CD4-positive, alpha-beta memory T cell (primary cell): ENCODE measurements at regions of chr17 and their contacts with region 1.

Region 1: DNA sequence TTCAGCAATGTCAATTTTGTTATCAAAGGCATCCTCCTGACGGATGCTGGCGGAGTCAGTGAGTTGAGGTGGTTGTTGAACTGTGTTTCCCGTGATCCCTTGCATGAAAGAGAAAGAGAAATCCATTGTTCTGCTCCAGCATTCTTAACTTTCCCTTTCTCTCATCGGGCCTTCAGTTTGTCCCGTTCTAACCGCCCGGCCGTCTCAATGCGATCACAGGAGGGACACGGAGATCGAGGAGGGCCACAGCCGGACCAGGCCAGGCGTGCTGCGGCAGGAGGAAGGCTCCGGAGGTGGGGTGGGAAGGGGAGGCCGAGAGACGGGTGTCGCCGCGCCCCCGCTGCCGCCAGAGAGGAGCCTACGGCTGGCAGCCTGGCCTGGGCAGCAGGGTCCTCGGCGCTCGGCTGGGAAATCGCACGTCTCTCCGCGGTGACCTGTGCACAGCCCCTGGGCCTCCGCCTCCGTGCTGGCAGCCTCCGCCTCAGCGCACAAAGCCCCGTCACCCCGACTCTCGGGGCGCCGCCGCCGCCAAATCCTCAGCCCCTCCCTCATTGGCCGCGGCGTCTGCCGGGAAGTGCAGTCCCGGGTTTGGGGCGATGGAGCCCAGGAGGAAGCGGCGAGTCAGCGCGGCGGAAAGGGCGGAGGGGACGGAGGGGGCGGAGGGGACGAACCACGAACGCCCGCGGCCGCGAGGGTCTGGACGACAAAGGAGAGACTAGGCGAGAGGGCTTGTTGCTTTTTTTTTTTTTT is 38.1 kb downstream of the SOST start:
- DNase-seq: peak; percentile 71 to 78 (median 75)
- H3K4me3 ChIP-seq: peak overlapping the region; percentile 68 to 91
- H3K4me3 Mint-ChIP-seq: peak overlapping the region; percentile 97 to 100 (median 98)
- H3K27ac ChIP-seq: peak overlapping the region; percentile 82
- H3K27ac Mint-ChIP-seq: peak overlapping the region; percentile 85 to 100 (median 98)
- H3K4me1 ChIP-seq: peaks cover 8% of the 10 kb centered on the region
- H3K4me1 Mint-ChIP-seq: peaks cover 3 to 8% (median 6%) of the 10 kb centered on the region in 4 donors
- H3K27me3 ChIP-seq: no peaks in the 10 kb centered on the region
- H3K27me3 Mint-ChIP-seq: peaks cover 3% of the 10 kb centered on the region in 2 donors

Region 2: GRCh38 chr17:43628089-43628650 is 92.3 kb before region 1 on chr17:
- CTCF ChIA-PET with region 1: no interaction called
- POLR2A ChIA-PET with region 1: no interaction called
- intact Hi-C with region 1: no loop called
- DNase-seq: no peak
- H3K4me3 ChIP-seq: no peak overlapping the region
- H3K4me3 Mint-ChIP-seq: no peak overlapping the region
- H3K27ac ChIP-seq: no peak overlapping the region
- H3K27ac Mint-ChIP-seq: peak overlapping the region in 1 of 7 donors; percentile 19
- H3K4me1 ChIP-seq: no peaks in the 10 kb centered on the region
- H3K4me1 Mint-ChIP-seq: no peaks in the 10 kb centered on the region
- H3K27me3 ChIP-seq: no peaks in the 10 kb centered on the region
- H3K27me3 Mint-ChIP-seq: peaks cover 5 to 10% of the 10 kb centered on the region in 2 donors

Region 3: DNA sequence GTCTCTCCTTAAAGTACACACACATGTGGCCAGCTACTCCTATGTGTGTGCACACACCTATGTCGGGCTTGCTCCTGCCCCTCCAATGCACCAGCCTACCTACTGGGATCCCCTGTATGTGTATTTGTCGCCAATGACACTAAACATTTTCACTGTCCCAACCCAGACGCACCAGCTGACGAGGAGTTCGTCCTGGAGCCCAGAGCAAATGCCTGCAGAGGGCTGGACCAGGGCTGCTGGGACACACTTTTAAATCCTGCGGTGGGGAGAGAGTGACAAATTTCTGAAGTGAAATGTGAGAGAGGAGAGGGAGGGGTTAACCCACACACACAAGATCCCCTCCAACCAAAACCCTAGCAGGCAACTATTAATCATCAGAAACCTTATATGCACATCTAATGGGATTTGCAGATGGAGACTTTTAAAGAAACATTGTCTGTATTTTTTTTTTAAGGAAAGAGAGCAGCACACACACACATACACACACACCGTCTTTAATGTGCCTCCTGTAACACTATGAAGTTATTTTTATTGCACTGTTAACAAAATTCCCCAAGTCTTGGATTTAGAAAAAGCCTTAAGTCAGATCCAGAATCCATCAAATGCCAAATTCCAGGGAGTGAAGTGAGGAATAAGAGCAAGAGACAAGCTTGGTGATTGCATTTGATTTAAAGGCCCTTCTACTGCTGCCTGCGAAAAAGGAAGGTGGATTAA is 58.6 kb before region 1 on chr17 and contains the start of gene MEOX1:
- CTCF ChIA-PET with region 1: no interaction called
- POLR2A ChIA-PET with region 1: no interaction called
- intact Hi-C with region 1: no loop called
- DNase-seq: no peak
- H3K4me3 ChIP-seq: peak within 1 kb of the TSS in 1 of 2 donors; percentile 40
- H3K4me3 Mint-ChIP-seq: peak within 1 kb of the TSS; percentile 33 to 87 (median 69)
- H3K27ac ChIP-seq: peak within 1 kb of the TSS; percentile 20
- H3K27ac Mint-ChIP-seq: peak within 1 kb of the TSS; percentile 55 to 85 (median 73)
- H3K4me1 ChIP-seq: peaks cover 62% of the 10 kb centered on the region
- H3K4me1 Mint-ChIP-seq: peaks cover 16 to 55% (median 47%) of the 10 kb centered on the region in 4 donors
- H3K27me3 ChIP-seq: no peaks in the 10 kb centered on the region
- H3K27me3 Mint-ChIP-seq: no peaks in the 10 kb centered on the region
- total RNA-seq, gene MEOX1: 1.7 to 2.1 TPM

Region 4: GRCh38 chr17:43760254-43760852 is 39.9 kb after region 1 on chr17:
- CTCF ChIA-PET with region 1: no interaction called
- POLR2A ChIA-PET with region 1: no interaction called
- intact Hi-C with region 1: loop called (anchors 1 kb)
- DNase-seq: peak; percentile 79 to 85 (median 83)
- H3K4me3 ChIP-seq: no peak overlapping the region
- H3K4me3 Mint-ChIP-seq: no peak overlapping the region
- H3K27ac ChIP-seq: no peak overlapping the region
- H3K27ac Mint-ChIP-seq: no peak overlapping the region
- H3K4me1 ChIP-seq: no peaks in the 10 kb centered on the region
- H3K4me1 Mint-ChIP-seq: peaks cover 0 to 6% (median 4%) of the 10 kb centered on the region in 4 donors
- H3K27me3 ChIP-seq: no peaks in the 10 kb centered on the region
- H3K27me3 Mint-ChIP-seq: peaks cover 18 to 19% of the 10 kb centered on the region in 2 donors

Region 5: DNA sequence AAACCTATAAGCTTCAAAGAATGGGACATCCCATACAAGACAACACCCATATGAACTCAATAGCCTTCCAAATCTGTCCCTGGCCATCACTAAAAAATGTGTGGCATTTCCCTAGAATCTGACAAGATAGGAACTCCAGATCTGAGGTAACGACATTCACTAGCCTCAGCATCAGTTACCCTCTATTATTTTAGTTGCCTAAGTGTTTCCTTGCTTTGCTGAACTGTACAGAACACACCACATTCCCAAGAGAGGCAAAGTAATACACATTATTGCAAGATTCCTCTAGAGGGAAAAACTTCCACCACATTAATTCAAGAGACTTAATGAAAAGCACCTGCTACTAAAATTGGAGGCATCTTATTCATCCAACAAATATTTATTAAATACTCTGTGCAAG is 341.0 kb after region 1 on chr17:
- CTCF ChIA-PET with region 1: no interaction called
- POLR2A ChIA-PET with region 1: no interaction called
- intact Hi-C with region 1: no loop called
- DNase-seq: no peak
- H3K4me3 ChIP-seq: no peak overlapping the region
- H3K4me3 Mint-ChIP-seq: no peak overlapping the region
- H3K27ac ChIP-seq: no peak overlapping the region
- H3K27ac Mint-ChIP-seq: peak overlapping the region in 1 of 7 donors; percentile 14
- H3K4me1 ChIP-seq: peaks cover 29% of the 10 kb centered on the region
- H3K4me1 Mint-ChIP-seq: peaks cover 20 to 50% (median 45%) of the 10 kb centered on the region in 4 donors
- H3K27me3 ChIP-seq: no peaks in the 10 kb centered on the region
- H3K27me3 Mint-ChIP-seq: no peaks in the 10 kb centered on the region